Activated CD4-positive, alpha-beta memory T cell treated with anti-CD3 and anti-CD28 coated beads for 36 hours (primary cell): ENCODE measurements at regions of chr3 and their contacts with region 1.

Region 1: DNA sequence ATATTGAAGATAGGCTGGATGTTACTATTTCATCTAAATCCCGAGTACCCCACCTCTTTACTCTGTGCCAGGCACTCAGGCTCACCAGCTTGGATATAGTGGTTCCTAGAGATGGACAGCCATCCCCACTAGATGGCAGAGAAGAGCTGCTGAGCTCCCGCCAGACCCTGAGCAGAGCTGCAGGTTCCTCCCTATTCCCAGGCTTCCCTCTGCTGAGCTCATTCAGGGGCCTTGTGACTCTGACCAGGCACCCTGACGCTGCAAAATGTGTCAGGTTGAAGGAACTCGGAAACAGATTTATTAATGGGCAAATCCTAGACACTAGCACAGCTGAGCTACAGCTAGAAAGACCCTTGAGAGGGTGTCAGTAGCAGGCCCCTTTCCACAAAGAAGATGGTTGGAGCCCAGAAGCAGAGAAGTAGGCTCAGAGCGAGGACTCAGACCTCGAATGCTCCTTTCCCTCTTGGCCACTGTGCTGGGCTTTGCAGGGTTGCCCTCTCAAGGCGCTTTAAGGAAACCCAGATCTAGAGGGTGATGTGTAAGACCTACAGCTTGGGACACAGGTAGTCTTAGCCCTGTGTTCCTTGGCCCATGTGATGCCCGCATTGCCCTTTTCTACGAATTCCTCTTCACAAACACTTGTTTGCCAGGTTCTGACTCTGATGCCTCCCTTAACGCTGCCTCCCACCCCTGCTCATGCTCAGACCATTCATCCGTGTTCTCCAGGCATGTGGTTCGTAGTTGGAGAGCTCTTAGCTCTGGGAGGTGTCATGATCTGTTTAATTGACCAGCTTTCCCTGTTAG is 38.0 kb upstream of the RHO start:
- DNase-seq: peak; percentile 65
- H3K4me3 Mint-ChIP-seq: no peak overlapping the region
- H3K27ac Mint-ChIP-seq: no peak overlapping the region
- H3K4me1 Mint-ChIP-seq: no peaks in the 10 kb centered on the region
- H3K27me3 Mint-ChIP-seq: no peaks in the 10 kb centered on the region

Region 2: DNA sequence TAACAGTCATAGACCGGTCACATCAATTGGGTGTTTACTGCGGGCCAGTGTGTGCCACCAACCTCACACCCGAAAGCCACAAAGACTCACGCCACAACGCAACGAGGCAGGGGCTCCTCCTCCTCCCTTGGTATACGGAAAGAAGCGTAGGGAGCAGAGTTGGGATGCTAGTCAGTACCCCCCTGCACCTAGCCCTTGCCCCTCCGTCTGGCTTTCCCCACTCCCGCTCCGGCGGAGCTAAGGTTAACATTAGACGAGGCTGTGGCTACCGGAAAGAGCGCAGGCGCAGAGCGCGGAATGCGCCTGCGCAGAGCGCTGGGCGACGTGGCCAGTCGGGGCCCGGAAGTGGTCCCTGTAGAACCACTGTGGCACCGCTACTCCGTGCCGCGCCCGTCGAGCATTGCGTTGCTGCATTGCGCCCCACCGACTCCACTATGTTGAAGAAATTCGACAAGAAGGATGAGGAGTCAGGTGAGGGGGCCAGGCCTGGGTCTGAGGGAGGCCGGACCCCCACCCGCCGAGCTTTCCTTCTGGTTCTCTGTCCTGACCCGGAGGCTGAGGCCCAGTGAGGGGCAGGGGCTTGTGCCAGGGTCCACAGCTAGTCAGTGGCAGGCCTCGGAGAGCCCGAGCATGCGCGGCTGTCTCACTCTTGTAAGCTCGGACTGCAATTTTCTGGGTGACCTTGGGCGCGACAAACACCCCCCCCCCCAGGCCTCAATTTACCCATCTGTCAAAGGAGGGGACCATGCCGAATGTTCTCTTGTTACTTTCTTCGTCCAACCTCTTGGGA is 241.0 kb before region 1 on chr3 and contains the start of gene COPG1:
- CTCF ChIA-PET with region 1: no interaction called
- POLR2A ChIA-PET with region 1: no interaction called
- intact Hi-C with region 1: no loop called
- DNase-seq: peak; percentile 92
- H3K4me3 Mint-ChIP-seq: peak within 1 kb of the TSS; percentile 89
- H3K27ac Mint-ChIP-seq: peak within 1 kb of the TSS; percentile 93
- H3K4me1 Mint-ChIP-seq: peaks cover 38% of the 10 kb centered on the region
- H3K27me3 Mint-ChIP-seq: no peaks in the 10 kb centered on the region
- total RNA-seq, gene COPG1: 154 to 162 TPM

Region 3: DNA sequence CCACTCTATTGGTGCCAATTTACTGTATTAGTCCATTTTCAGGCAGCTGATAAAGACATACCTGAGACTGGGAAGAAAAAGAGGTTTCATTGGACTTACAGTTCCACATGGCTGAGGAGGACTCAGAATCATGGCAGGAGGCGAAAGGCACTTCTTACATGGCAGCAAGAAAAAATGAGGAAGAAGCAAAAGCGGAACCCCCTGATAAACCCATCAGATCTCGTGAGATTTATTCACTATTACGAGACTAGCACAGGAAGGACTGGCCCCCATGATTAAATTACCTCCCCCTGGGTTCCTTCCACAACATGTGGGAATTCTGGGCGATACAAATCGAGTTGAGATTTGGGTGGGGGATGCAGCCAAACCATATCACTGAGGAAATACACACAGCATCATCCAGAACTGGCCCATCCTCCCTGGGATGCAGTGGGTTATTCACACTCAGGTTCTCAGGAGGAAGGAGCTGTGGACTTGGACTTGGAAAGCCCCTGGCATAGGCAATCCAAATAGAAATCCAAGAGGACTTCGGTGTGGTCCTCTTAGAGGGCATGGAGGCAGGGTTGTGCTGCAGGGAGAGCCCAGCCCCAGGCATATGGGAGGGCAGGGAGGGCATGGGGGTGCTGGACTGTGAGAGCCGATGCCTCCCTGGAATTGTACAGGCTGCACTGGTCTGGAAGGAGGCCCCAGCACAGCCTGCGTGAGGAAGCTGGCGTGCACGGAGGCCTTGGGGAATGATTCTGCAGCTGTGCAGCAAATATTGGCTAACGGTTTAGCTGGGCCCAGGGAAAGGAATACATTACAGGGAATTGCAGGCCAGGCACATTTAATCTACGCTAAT is 124.9 kb before region 1 on chr3:
- CTCF ChIA-PET with region 1: no interaction called
- POLR2A ChIA-PET with region 1: no interaction called
- intact Hi-C with region 1: no loop called
- DNase-seq: no peak
- H3K4me3 Mint-ChIP-seq: no peak overlapping the region
- H3K27ac Mint-ChIP-seq: no peak overlapping the region
- H3K4me1 Mint-ChIP-seq: no peaks in the 10 kb centered on the region
- H3K27me3 Mint-ChIP-seq: no peaks in the 10 kb centered on the region

Region 4: GRCh38 chr3:129606636-129607390 is 116.4 kb after region 1 on chr3 and contains the start of gene PLXND1:
- CTCF ChIA-PET with region 1: interaction called, 5 read pairs
- POLR2A ChIA-PET with region 1: no interaction called
- intact Hi-C with region 1: loop called (anchors 1 kb)
- DNase-seq: peak; percentile 46
- H3K4me3 Mint-ChIP-seq: peak within 1 kb of the TSS; percentile 76
- H3K27ac Mint-ChIP-seq: no peak within 1 kb of the TSS
- H3K4me1 Mint-ChIP-seq: peaks cover 12% of the 10 kb centered on the region
- H3K27me3 Mint-ChIP-seq: peaks cover 14% of the 10 kb centered on the region
- total RNA-seq, gene PLXND1: 7.2 to 8.6 TPM

Region 5: GRCh38 chr3:129934234-129935123 is 444.0 kb after region 1 on chr3:
- CTCF ChIA-PET with region 1: interaction called, 18 read pairs
- POLR2A ChIA-PET with region 1: no interaction called
- intact Hi-C with region 1: loop called (anchors 1 kb)
- DNase-seq: peak; percentile 31
- H3K4me3 Mint-ChIP-seq: no peak overlapping the region
- H3K27ac Mint-ChIP-seq: no peak overlapping the region
- H3K4me1 Mint-ChIP-seq: peaks cover 6% of the 10 kb centered on the region
- H3K27me3 Mint-ChIP-seq: peaks cover 4% of the 10 kb centered on the region